BJ (cell line): ENCODE measurements at regions of chr17 and their contacts with region 1.

Region 1: DNA sequence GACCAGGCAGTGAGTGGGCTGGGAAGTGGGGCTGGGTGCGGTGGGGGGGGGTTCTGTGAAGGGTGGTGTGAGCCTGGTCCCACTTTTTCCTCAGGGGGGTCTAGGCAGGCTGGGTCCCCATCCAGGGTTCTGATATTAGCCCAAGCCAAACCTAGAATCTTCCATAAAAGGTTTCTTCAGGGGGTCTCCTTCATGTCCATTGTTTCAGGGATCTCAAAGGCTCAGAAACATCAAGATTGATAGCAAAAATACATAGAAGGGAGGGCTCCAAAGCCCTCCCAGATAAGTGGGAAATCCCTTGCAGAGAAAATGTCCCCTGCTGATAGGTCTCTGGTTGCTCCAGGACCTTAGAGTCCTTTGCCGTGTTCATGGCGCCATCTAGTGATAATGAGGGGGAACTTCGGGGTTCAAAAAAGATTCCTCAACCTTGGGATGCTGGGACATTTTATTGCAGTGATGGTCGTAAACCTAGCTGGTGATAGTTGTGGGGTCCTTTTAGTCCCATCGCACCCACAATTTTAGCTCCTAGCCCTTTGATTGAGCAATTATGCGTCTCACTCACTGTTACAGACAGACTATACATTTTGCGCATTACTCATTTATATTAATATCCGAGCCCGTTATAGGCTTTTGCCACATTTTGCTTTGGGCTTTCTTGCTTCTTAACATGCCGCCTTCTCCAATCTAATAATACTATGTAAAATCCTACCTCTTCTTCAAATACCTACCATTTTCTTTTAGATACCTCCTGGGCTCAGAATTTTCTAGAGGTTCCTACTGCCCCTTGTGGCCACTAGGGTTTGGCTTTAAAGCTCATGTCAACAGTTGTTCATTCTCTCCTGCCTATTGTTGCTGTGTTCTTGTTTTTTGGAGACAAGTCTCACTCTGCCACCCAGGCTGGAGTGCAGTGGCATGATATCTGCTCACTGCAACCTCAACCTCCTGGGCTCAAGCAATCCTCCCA is 35.1 kb downstream of the IGF2BP1 start:
- DNase-seq: no peak
- H3K4me3 ChIP-seq: no peak overlapping the region
- H3K27me3 ChIP-seq: no peaks in the 10 kb centered on the region
- CTCF ChIP-seq: peak; percentile 79

Region 2: GRCh38 chr17:48791128-48792032 is 240.9 kb before region 1 on chr17:
- CTCF ChIA-PET with region 1: no interaction called
- POLR2A ChIA-PET with region 1: no interaction called
- DNase-seq: peak; percentile 35
- H3K4me3 ChIP-seq: no peak overlapping the region
- H3K27me3 ChIP-seq: peaks cover 13% of the 10 kb centered on the region
- CTCF ChIP-seq: peak; percentile 89

Region 3: GRCh38 chr17:48892940-48893645 is 139.2 kb before region 1 on chr17:
- CTCF ChIA-PET with region 1: interaction called, 21 read pairs
- POLR2A ChIA-PET with region 1: no interaction called
- DNase-seq: no peak
- H3K4me3 ChIP-seq: peak overlapping the region; percentile 98
- H3K27me3 ChIP-seq: no peaks in the 10 kb centered on the region
- CTCF ChIP-seq: no peak

Region 4: DNA sequence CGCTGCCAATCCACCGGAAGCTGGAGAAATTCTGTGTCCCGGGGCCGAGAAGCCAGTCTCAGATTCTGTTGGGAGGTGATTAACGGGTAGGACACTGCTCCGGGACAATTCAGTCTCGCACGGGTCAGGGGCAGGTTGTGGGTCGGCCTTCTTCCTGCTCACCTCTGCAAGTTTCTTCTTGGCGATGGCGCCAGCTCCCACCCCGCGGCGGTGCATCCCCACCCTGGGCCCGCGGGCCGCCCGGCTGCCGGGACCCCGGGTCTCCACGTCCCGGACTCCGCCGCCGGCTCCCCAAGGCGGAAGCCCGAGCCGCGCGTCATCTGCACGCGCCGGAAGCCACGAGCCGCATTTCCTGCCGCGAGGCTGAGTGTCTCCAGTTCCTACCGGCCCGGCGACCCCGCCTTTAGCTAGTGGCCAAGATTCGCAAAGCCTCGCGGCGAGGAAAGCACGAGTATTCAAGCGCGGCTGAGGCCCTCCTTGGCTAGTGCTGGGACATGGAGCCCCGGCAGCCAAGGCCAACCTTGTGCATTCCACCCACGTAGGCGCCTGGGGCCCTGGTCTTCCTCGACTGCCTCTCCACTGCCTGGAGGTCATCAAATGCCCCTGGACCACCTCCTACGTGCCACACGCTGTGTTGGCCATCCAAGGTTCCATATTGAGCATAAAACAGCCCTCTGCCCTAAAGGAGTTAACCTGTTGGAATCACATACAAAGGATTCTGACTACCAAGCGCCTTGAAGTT is 87.6 kb before region 1 on chr17 and contains the start of gene SNF8:
- CTCF ChIA-PET with region 1: interaction called, 27 read pairs
- POLR2A ChIA-PET with region 1: no interaction called
- DNase-seq: peak; percentile 39
- H3K4me3 ChIP-seq: peak within 1 kb of the TSS; percentile 62
- H3K27me3 ChIP-seq: no peaks in the 10 kb centered on the region
- CTCF ChIP-seq: no peak
- polyA plus RNA-seq, gene SNF8: 104 and 113 TPM in 2 replicates

Region 5: DNA sequence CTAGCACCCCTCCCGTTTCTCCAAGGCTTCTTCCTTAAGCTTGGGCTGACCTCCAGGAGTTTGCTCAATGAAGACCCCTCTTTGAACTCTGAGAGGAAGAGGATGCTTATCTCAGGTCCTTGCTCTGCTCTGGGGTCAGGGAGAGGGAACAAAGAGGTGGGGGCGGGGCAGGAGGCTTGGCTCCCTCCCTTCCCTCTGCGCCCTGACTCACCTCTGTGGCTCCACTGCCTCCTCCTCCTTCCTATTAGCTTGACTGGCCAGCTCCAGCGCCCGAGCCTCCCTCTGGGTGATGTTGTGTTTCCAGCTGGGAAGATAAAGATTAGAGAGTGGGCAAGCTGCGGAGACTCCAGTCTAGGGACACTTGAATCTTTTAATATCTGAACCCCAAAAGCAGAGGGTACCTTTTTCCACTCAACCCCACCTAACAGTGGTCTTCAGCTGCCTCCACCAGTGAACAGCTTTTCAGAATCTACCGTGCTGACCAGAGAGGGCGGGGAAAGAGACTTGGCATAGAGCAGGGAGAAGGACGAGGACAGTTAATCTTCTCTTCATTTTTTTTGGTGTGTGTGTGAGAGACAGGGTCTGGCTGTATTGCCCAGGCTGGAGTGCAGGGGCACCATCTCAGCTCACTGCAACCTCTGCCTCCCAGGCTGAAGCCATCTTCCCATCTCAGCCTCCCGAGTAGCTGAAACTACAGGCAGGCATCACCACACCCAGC is 70.6 kb before region 1 on chr17:
- CTCF ChIA-PET with region 1: interaction called, 93 read pairs
- POLR2A ChIA-PET with region 1: interaction called, 10 read pairs
- DNase-seq: no peak
- H3K4me3 ChIP-seq: no peak overlapping the region
- H3K27me3 ChIP-seq: no peaks in the 10 kb centered on the region
- CTCF ChIP-seq: no peak

Region 6: GRCh38 chr17:48997083-48997826 is 35.0 kb before region 1 on chr17 and contains the start of gene IGF2BP1:
- CTCF ChIA-PET with region 1: interaction called, 30 read pairs
- POLR2A ChIA-PET with region 1: no interaction called
- DNase-seq: no peak
- H3K4me3 ChIP-seq: peak within 1 kb of the TSS; percentile 41
- H3K27me3 ChIP-seq: peaks cover 24% of the 10 kb centered on the region
- CTCF ChIP-seq: no peak
- polyA plus RNA-seq, gene IGF2BP1: 3.7 and 5.3 TPM in 2 replicates

Region 7: GRCh38 chr17:49016788-49017463 is 15.3 kb before region 1 on chr17:
- CTCF ChIA-PET with region 1: interaction called, 18 read pairs
- POLR2A ChIA-PET with region 1: no interaction called
- DNase-seq: no peak
- H3K4me3 ChIP-seq: no peak overlapping the region
- H3K27me3 ChIP-seq: peaks cover 5% of the 10 kb centered on the region
- CTCF ChIP-seq: no peak

Region 8: DNA sequence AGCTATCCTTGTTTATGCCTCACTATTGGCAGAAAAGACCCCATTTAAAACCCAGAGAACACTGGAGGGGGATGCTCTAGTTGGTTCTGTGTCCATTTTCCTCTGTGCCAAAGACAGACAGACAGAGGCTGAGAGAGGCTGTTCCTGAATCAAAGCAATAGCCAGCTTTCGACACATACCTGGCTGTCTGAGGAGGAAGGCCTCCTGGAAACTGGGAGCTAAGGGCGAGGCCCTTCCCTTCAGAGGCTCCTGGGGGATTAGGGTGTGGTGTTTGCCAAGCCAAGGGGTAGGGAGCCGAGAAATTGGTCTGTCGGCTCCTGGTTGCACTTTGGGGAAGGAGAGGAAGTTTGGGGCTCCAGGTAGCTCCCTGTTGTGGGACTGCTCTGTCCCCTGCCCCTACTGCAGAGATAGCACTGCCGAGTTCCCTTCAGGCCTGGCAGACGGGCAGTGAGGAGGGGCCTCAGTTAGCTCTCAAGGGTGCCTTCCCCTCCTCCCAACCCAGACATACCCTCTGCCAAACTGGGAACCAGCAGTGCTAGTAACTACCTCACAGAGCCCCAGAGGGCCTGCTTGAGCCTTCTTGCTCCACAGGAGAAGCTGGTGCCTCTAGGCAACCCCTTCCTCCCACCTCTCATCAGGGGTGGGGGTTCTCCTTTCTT is 21.1 kb after region 1 on chr17:
- CTCF ChIA-PET with region 1: interaction called, 41 read pairs
- POLR2A ChIA-PET with region 1: no interaction called
- DNase-seq: no peak
- H3K4me3 ChIP-seq: no peak overlapping the region
- H3K27me3 ChIP-seq: no peaks in the 10 kb centered on the region
- CTCF ChIP-seq: no peak